HepG2 (cell line): ENCODE measurements at regions of chr4 and their contacts with region 1.

Region 1: DNA sequence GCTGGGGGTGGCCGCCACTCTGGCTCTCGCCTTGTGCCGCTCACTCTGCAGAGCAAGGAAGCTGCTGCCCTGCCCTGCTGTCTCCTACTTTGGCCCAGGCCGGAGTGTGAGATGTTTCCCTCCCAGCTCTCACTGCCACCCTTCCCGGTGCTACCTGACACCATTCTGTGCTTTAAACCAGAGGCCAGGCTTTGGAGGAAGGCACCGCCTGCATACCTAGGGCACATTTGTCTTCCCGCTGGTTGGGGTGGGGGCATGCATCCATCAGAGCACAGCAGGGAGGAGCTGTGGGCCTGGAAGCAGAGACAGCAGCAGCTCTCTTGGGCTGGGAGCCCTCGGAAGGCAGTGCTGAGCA is 96.9 kb upstream of the PSAPL1 start:
- DNase-seq: no peak
- ATAC-seq: peak; percentile 56
- H3K4me3 ChIP-seq: peak overlapping the region; percentile 3 to 75 (median 52); a peak in 5 of 6 replicates
- H3K27ac ChIP-seq: peak overlapping the region; percentile 39
- H3K4me1 ChIP-seq: peaks cover 45% of the 10 kb centered on the region
- H3K27me3 ChIP-seq: peaks cover 0 to 2% of the 10 kb centered on the region in 2 experiments; a peak in 2 of 5 replicates
- CTCF ChIP-seq: no peak
- EP300 ChIP-seq: no peak
- POLR2A ChIP-seq: no peak
- RAD21 ChIP-seq: no peak; the same call in 1 of the 2 replicates

Region 2: DNA sequence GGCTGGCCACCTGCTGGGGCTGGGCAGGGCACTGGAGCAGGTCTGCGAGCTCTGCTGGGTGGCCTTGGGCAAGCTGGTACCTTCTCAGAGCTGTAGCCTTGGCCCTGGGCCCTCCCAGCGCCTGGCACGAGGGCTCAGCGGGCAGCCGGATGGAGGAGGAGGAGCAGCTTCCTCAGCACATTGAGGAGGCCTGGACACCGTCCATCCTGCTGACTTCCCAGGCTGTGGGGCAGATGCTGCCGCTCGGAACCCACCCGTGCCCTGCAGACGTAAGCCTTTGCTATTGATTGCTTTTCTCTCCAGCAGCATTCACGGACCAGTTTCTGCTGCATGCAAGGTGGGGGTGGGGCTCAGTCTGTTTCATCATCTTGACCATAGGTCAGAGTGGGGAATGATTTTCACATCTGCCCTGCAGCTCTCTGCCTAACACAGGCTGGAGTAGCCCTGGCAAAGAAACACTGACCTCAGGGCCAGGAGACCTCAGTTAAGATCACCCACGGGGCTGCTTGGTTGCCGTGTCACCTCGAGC is 16.2 kb before region 1 on chr4:
- CTCF ChIA-PET with region 1: no interaction called
- POLR2A ChIA-PET with region 1: interaction called, 21 read pairs
- in situ Hi-C with region 1: no loop called
- intact Hi-C with region 1: no loop called
- DNase-seq: peak; percentile 41
- ATAC-seq: peak; percentile 78
- H3K4me3 ChIP-seq: peak overlapping the region; percentile 9 to 60 (median 41); a peak in 5 of 6 replicates
- H3K27ac ChIP-seq: peak overlapping the region; percentile 7
- H3K4me1 ChIP-seq: peaks cover 67% of the 10 kb centered on the region
- H3K27me3 ChIP-seq: peaks cover 4 to 15% of the 10 kb centered on the region in 2 experiments
- CTCF ChIP-seq: no peak
- EP300 ChIP-seq: no peak; a peak in 1 of 4 replicates
- POLR2A ChIP-seq: no peak
- RAD21 ChIP-seq: no peak